ENCODE measurements at regions of chr4 and their contacts with region 1.

Region 1: DNA sequence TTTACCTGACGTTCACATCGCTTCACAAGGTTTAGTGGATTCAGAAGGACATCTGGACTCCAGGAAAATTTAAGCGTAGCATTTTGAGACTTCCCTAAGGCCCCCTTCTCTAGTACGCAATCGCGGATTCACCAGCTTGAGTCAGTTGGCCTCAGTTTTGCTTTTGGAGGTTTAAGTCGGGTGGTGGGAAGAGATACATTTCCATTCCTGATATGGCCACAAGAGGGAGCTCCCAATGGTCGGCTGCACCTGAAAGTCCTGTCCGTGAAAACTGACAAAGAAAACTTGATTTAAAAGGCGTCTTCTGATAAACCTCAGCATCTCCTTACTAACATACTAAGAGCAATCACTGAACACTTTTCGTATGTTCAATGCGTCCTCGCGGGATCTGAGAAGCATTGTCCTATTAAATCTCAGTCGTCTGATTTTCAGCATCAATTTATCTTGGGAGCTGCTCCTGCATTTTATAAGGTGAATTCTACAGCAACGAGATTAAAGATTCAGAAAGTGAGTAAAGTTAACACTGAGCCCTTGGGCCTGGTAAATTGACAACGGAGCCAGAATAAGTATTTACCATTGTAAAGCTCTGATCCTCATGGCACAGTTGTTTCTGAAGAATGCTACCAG is 50.6 kb downstream of the LGI2 start:
- DNase-seq: no peak
- ATAC-seq: peak; percentile 28
- H3K4me3 Mint-ChIP-seq: peak overlapping the region; percentile 58
- H3K27ac Mint-ChIP-seq: no peak overlapping the region
- H3K4me1 Mint-ChIP-seq: peaks cover 6% of the 10 kb centered on the region
- H3K27me3 Mint-ChIP-seq: peaks cover 15% of the 10 kb centered on the region
- CTCF ChIP-seq: peak; percentile 31

Region 2: GRCh38 chr4:24472514-24473308 is 507.5 kb before region 1 on chr4:
- CTCF ChIA-PET with region 1: no interaction called
- POLR2A ChIA-PET with region 1: no interaction called
- intact Hi-C with region 1: loop called (anchors 5 kb)
- DNase-seq: peak; percentile 39
- ATAC-seq: peak; percentile 75
- H3K4me3 Mint-ChIP-seq: peak overlapping the region; percentile 93
- H3K27ac Mint-ChIP-seq: peak overlapping the region; percentile 62
- H3K4me1 Mint-ChIP-seq: peaks cover 35% of the 10 kb centered on the region
- H3K27me3 Mint-ChIP-seq: peaks cover 57% of the 10 kb centered on the region
- CTCF ChIP-seq: no peak

Region 3: DNA sequence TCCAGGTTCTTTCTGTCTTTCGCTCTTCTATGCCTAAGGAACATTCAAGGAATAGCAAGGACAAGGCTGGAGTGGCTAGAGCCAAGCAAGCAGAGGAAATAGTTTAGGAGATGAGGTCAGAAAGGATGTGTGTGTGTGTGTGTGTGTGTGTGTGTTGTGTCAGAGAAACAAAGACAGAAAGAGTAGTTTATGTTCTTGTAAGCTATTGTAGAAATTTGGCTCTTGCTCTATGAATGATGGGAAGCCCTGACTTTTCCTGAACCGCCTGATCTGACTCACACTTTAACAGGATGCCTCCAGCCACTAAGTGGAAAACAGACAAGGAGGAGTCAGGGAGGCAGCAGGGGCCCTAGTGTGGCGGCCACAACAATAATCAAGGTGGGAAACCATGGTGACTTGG is 10.8 kb after region 1 on chr4:
- CTCF ChIA-PET with region 1: interaction called, 10 read pairs
- POLR2A ChIA-PET with region 1: no interaction called
- intact Hi-C with region 1: no loop called
- DNase-seq: no peak
- ATAC-seq: no peak
- H3K4me3 Mint-ChIP-seq: no peak overlapping the region
- H3K27ac Mint-ChIP-seq: no peak overlapping the region
- H3K4me1 Mint-ChIP-seq: no peaks in the 10 kb centered on the region
- H3K27me3 Mint-ChIP-seq: peaks cover 6% of the 10 kb centered on the region
- CTCF ChIP-seq: no peak

Region 4: GRCh38 chr4:25144870-25145481 is 164.8 kb after region 1 on chr4:
- CTCF ChIA-PET with region 1: interaction called, 19 read pairs
- POLR2A ChIA-PET with region 1: interaction called, 6 read pairs
- intact Hi-C with region 1: loop called (anchors 1 kb)
- DNase-seq: no peak
- ATAC-seq: no peak
- H3K4me3 Mint-ChIP-seq: no peak overlapping the region
- H3K27ac Mint-ChIP-seq: no peak overlapping the region
- H3K4me1 Mint-ChIP-seq: no peaks in the 10 kb centered on the region
- H3K27me3 Mint-ChIP-seq: no peaks in the 10 kb centered on the region
- CTCF ChIP-seq: no peak

Region 5: GRCh38 chr4:25367004-25367621 is 386.9 kb after region 1 on chr4:
- CTCF ChIA-PET with region 1: interaction called, 55 read pairs
- POLR2A ChIA-PET with region 1: no interaction called
- intact Hi-C with region 1: loop called (anchors 1 kb)
- DNase-seq: no peak
- ATAC-seq: no peak
- H3K4me3 Mint-ChIP-seq: no peak overlapping the region
- H3K27ac Mint-ChIP-seq: no peak overlapping the region
- H3K4me1 Mint-ChIP-seq: no peaks in the 10 kb centered on the region
- H3K27me3 Mint-ChIP-seq: no peaks in the 10 kb centered on the region
- CTCF ChIP-seq: no peak

Region 6: DNA sequence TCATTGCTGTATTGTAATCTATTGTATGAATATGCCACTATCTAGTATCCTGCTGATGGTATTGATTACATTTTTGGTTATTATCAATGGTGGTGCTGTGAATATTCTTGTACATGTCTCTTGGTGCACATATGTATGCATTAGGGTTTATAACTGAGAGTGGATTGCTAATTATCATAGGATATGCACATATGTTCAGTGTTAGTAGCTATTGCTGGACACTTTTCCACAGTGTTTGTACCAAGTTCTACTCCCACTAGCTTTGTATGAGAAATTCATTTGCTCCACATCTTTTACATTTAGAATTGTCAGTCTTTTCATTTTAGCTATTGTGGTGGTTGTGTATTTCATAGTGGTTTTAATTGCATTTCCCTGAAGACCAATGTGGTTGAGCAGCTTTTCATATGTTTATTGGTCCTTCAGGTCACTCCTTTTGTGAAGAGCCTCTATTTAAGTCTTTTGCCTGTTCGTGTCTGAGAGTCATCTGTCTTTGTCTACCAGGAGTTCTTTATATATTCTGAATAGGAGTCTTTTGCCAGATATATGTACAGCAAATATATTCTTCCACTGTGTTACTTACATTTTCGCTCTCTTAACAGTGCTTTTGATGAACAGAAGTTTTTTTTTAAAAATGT is 1690.8 kb after region 1 on chr4:
- CTCF ChIA-PET with region 1: no interaction called
- POLR2A ChIA-PET with region 1: no interaction called
- intact Hi-C with region 1: no loop called
- DNase-seq: no peak
- ATAC-seq: no peak
- H3K4me3 Mint-ChIP-seq: no peak overlapping the region
- H3K27ac Mint-ChIP-seq: no peak overlapping the region
- H3K4me1 Mint-ChIP-seq: no peaks in the 10 kb centered on the region
- H3K27me3 Mint-ChIP-seq: no peaks in the 10 kb centered on the region
- CTCF ChIP-seq: no peak

Measured in activated B cell treated with CpG ODN at 0.5 μM for 24 hours (primary cell).